Testis (tissue), 5 donors: ENCODE measurements at regions of chr11 and their contacts with region 1.

Region 1: GRCh38 chr11:47355283-47356128 is 3.0 kb upstream of the MYBPC3 start:
- DNase-seq: peak; percentile 98
- H3K4me3 ChIP-seq: peak overlapping the region; percentile 48 to 56
- H3K27ac ChIP-seq: peak overlapping the region in 1 of 2 donors; percentile 66
- H3K4me1 ChIP-seq: peaks cover 6% of the 10 kb centered on the region
- H3K27me3 ChIP-seq: no peaks in the 10 kb centered on the region
- CTCF ChIP-seq: peak; percentile 83 to 95 (median 86)
- POLR2A ChIP-seq: no peak

Region 2: GRCh38 chr11:46889689-46890475 is 465.6 kb before region 1 on chr11:
- intact Hi-C with region 1: loop called (anchors 10 kb)
- DNase-seq: peak; percentile 92
- H3K4me3 ChIP-seq: no peak overlapping the region
- H3K27ac ChIP-seq: no peak overlapping the region
- H3K4me1 ChIP-seq: no peaks in the 10 kb centered on the region
- H3K27me3 ChIP-seq: no peaks in the 10 kb centered on the region
- CTCF ChIP-seq: peak; percentile 83 to 88 (median 86)
- POLR2A ChIP-seq: no peak

Region 3: DNA sequence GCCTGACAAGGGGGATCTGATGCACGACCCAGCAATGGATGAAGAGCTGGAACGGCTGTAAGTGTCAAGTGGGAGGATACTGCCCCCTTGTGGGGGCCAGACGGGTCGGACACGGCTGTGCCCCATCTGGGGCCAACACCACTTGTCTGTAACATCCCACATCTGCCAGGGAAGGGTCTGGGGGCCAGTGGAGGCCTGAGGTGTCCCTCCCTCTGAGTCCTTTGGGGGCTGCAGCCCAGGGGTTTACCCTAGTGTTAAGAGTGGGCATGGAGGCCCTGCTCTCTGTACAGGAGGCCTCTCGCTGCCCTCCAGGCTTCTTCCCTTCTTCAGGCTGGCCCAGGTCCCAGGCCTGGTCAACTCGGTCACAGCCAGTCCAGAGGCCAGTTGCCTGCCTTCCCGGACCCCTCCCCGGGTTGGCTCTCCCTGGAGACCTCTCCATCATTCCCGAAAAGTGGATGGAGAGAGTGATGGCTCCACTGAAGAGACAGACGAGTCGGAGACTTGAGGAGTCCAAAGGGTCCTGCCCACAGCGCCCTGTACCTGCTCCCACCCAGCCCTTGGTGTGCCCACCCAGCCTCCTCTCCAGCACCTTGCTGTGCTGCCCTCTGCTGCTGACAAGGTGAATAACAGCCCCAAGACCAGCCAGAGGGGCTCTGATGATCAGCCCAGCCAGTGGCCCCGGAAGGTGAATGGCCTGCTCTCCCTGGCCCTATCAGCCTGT is 194.2 kb before region 1 on chr11:
- intact Hi-C with region 1: loop called (anchors 10 kb)
- DNase-seq: peak; percentile 74
- H3K4me3 ChIP-seq: no peak overlapping the region
- H3K27ac ChIP-seq: no peak overlapping the region
- H3K4me1 ChIP-seq: peaks cover 10% of the 10 kb centered on the region
- H3K27me3 ChIP-seq: no peaks in the 10 kb centered on the region
- CTCF ChIP-seq: peak; percentile 46 to 65 (median 48)
- POLR2A ChIP-seq: no peak

Region 4: DNA sequence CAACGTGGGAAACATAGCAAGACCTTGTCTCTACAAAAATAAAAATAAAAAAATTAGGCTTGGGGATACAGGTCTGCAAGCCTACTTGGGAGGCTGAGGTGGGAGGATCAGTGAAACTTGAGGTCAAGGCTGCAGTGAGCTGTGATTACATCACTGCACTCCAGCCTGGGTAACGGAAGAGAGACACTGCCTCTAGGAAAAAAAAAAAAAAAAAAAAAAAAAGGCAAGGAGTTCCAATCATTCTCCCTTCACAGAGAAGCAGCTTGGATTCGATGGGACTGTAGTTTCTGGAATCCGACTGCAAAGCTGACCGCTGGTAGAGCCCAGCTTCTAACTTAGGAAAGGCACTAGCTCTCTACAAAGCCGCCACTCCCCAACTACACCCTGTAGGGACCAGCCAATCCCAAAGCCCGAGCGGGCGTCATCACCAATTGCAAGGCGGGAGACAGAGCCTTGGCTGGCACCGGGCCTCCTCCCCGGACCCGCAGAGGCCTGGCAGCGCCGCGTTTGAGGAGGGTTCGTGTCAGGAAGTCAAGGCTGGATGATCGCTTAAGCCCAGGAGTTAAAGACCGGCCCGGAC is 141.4 kb before region 1 on chr11:
- intact Hi-C with region 1: no loop called
- DNase-seq: peak; percentile 95
- H3K4me3 ChIP-seq: peak overlapping the region; percentile 41 to 87
- H3K27ac ChIP-seq: peak overlapping the region; percentile 90 to 97
- H3K4me1 ChIP-seq: peaks cover 17% of the 10 kb centered on the region
- H3K27me3 ChIP-seq: no peaks in the 10 kb centered on the region
- CTCF ChIP-seq: no peak
- POLR2A ChIP-seq: no peak

Region 5: GRCh38 chr11:47819743-47820142 is 464.2 kb after region 1 on chr11:
- intact Hi-C with region 1: no loop called
- DNase-seq: no peak
- H3K4me3 ChIP-seq: no peak overlapping the region
- H3K27ac ChIP-seq: no peak overlapping the region
- H3K4me1 ChIP-seq: no peaks in the 10 kb centered on the region
- H3K27me3 ChIP-seq: no peaks in the 10 kb centered on the region
- CTCF ChIP-seq: no peak
- POLR2A ChIP-seq: no peak